ENCODE measurements at regions of chr11 and their contacts with region 1.

Region 1: DNA sequence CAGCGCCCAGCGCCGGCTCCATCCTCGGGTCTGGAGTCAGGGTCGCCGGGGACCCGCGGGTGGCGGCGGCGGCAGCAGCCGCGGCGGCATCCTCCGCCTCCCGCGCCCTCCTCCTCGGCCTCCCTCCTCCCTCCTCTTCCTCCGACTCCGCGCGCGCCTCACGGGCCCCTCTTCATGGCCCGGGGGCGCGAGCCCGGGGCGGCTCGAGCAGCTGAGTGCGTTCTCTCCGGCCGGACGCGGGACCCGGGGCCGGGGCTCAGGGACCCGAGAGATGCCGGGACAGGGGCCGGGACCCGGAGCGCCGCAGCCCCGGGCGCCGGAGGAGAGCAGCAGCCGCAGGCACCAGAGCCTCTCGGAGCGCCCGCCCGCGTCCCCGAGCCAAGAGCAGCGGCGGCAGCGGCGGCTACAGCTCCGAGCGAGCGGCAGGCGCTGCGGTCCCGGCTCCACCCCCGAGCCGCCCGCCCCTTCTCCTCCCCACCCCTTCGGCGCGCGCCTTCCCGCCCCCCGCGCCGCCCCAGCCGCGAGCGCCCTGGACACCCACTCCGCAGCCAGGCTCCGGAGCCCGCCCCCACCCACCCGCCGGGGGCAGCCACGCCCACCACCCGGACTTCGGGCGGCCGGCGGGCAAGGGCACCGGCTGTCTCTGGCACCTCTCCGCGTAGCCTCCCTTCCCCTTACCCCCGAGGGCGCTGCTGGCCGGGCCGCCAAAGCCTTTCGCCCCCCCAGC is at the start of gene CHST1:
- DNase-seq: peak; percentile 74 to 88 (median 86)
- ATAC-seq: peak; percentile 85 to 90
- H3K4me3 ChIP-seq: peak within 1 kb of the TSS; percentile 88
- H3K27ac ChIP-seq: no peak within 1 kb of the TSS
- H3K4me1 ChIP-seq: no peaks in the 10 kb centered on the region
- H3K27me3 ChIP-seq: no peaks in the 10 kb centered on the region
- total RNA-seq, gene CHST1: 2.4 to 7.0 (median 3.3) TPM

Region 2: GRCh38 chr11:45754261-45754709 is 88.9 kb after region 1 on chr11:
- intact Hi-C with region 1: loop called in 1 of 4 experiments (anchors 10 kb)
- DNase-seq: peak; percentile 44 to 84 (median 83)
- ATAC-seq: peak; percentile 84 to 90
- H3K4me3 ChIP-seq: no peak overlapping the region
- H3K27ac ChIP-seq: peak overlapping the region; percentile 56
- H3K4me1 ChIP-seq: peaks cover 4% of the 10 kb centered on the region
- H3K27me3 ChIP-seq: no peaks in the 10 kb centered on the region

Region 3: DNA sequence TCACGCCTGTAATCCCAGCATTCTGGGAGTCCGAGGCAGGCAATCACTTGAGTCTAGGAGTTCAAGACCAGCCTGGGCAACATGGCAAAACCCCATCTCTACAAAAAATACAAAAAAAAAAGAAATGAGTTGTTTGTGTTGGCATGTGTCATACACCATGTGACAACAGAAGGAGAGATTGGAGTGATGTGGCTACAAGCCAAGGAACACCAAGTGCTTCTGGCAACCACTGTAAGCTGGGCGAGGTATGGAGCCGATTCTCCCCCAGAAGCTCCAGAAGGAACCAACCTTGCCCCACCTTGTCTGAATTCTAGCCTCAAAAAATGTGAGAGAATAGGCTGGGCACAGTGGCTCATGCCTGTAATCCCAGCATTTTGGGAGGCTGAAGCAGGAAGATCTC is 100.5 kb after region 1 on chr11:
- intact Hi-C with region 1: loop called in 3 of 4 experiments (anchors 5 to 10 kb)
- DNase-seq: no peak
- ATAC-seq: no peak
- H3K4me3 ChIP-seq: no peak overlapping the region
- H3K27ac ChIP-seq: no peak overlapping the region
- H3K4me1 ChIP-seq: no peaks in the 10 kb centered on the region
- H3K27me3 ChIP-seq: no peaks in the 10 kb centered on the region

Measured in right cardiac atrium (tissue), 5 donors.